Heart right ventricle (tissue), 16 donors: ENCODE measurements at regions of chr9 and their contacts with region 1.

Region 1: DNA sequence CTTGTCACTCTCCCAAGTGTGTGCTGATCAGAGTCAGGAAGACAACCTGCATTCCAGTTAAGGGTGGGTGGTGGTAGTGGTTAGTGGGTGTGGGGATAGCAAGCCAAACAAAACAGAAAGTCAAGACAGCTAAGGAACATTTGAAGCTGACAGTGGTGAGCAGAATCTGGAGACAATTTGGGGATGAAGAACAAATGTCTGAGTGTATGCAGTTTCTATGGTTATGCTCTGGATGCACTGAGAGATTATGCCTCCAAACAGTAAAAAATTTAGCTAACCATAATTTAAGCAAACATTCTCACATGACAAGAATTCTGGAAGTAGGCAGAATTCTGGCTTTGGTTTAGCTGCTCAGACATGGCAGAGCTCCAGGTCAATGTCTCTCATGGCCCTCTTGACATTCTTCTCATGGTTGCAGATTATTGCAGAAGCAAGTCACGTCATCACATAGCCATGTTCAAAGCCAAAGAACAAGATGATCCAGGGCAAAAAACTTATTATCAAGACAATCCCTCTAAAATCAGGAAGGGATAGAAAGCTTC is 148.7 kb downstream of the LURAP1L start:
- DNase-seq: peak in 1 of 2 donors; percentile 6
- ATAC-seq: peak in 6 of 8 donors; percentile 38 to 89 (median 72)
- H3K4me3 ChIP-seq: no peak overlapping the region
- H3K27ac ChIP-seq: peak overlapping the region in 2 of 10 donors; percentile 28 to 37
- H3K4me1 ChIP-seq: peaks cover 0 to 21% (median 8%) of the 10 kb centered on the region in 9 donors
- H3K27me3 ChIP-seq: no peaks in the 10 kb centered on the region
- CTCF ChIP-seq: no peak

Region 2: GRCh38 chr9:12826924-12827565 is 96.5 kb before region 1 on chr9:
- intact Hi-C with region 1: no loop called
- DNase-seq: no peak
- ATAC-seq: no peak
- H3K4me3 ChIP-seq: no peak overlapping the region
- H3K27ac ChIP-seq: no peak overlapping the region
- H3K4me1 ChIP-seq: no peaks in the 10 kb centered on the region
- H3K27me3 ChIP-seq: no peaks in the 10 kb centered on the region
- CTCF ChIP-seq: no peak

Region 3: DNA sequence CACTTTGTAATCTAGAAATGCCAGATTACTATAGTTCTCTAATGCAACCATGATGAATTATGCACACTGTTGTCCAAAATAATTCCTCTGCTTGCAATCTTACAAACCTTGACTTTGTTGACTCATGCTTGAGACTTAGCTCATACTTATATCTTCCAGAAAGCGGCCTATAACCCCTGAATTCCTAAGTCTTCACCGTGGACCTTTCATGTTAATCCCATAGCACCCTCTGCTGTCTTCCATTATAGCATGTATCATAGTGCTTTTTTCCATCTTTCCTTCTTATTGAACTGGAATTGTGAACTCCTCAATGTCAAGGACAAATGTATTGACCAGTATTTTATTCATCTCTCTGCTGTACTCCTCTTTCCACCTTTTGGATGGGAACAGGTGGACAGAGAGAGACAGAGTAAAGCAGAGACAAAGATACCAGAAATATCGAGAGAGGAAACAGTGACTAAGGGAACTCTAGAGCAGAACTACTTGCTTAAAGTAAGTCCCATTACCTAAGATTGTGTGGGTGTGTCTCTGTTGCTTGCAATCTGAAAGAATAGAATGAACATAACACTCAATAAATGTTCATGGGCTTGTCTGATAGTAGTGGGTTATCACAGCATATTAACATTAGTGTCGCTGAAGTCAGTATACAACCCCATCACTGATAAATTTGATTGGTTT is 38.7 kb before region 1 on chr9:
- intact Hi-C with region 1: no loop called
- DNase-seq: no peak
- ATAC-seq: peak in 6 of 8 donors; percentile 52 to 72 (median 59)
- H3K4me3 ChIP-seq: no peak overlapping the region
- H3K27ac ChIP-seq: no peak overlapping the region
- H3K4me1 ChIP-seq: peaks cover 0 to 29% (median 5%) of the 10 kb centered on the region in 9 donors
- H3K27me3 ChIP-seq: no peaks in the 10 kb centered on the region
- CTCF ChIP-seq: peak; percentile 31 to 76 (median 60)

Region 4: GRCh38 chr9:12955530-12956163 is 32.1 kb after region 1 on chr9:
- intact Hi-C with region 1: loop called in 2 of 10 experiments (anchors 1 to 5 kb)
- DNase-seq: no peak
- ATAC-seq: no peak
- H3K4me3 ChIP-seq: no peak overlapping the region
- H3K27ac ChIP-seq: no peak overlapping the region
- H3K4me1 ChIP-seq: no peaks in the 10 kb centered on the region
- H3K27me3 ChIP-seq: no peaks in the 10 kb centered on the region
- CTCF ChIP-seq: no peak

Region 5: DNA sequence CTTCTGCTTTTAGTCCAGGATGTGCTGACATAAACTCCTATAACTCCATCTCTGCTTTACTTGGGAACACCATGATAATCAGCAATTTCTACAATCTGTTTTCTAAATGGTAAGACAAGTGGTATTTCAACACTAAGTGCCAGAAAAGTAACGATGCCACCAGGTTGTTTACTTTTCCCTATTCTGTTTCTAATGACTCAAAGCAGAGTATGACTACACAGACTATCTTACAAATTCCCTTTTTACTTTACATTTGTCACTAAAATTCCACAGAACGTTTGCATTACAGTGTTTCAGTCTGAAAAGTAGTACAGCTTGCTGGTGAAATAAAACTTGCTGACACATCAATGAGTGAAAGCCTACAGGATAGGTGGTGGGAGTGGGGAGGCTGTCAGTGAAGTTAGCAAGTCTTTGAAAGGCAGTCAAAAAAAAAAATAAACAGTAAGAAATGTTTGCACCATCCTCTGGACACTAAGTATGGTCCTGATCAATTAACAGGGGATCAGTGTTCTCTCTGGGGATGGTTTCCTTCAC is 37.8 kb after region 1 on chr9:
- intact Hi-C with region 1: loop called in 2 of 10 experiments (anchors 1 to 5 kb)
- DNase-seq: no peak
- ATAC-seq: no peak
- H3K4me3 ChIP-seq: no peak overlapping the region
- H3K27ac ChIP-seq: no peak overlapping the region
- H3K4me1 ChIP-seq: peaks cover 0 to 12% (median 0%) of the 10 kb centered on the region in 9 donors
- H3K27me3 ChIP-seq: no peaks in the 10 kb centered on the region
- CTCF ChIP-seq: no peak

Region 6: DNA sequence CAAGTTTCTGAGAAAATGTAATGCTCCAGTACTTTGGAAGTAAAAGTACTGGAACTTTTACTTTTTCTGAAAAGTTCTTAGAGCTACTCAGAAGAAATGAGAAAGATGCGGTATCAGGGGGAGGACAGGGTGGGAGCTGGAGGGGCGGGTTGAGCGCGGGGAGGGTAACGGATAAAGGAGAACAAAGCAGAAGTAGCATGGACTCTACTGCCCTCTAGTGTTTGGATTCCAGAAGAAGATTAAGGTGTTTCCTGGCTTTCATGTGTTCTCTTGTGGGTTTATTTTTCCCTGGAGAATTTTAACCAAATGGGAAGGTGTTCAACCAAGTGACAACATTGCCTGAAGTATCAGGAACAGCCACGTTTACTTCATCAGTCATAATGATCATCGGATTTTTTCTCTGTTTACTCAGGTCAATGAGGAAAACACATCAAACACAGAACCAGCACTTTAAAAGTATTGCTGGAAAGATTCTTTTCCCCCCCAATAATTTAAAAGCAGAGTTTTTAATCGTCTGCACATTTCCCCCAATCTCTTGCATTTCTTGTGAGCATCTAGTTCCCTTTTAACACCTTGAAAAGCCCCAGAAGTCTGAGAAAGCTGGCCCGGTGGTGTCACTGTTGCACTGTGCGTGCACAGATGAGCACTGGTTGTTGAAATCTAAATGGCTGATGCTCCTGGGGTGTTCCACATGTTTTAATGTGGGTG is 165.3 kb after region 1 on chr9:
- intact Hi-C with region 1: no loop called
- DNase-seq: peak in 1 of 2 donors; percentile 13
- ATAC-seq: peak in 5 of 8 donors; percentile 51 to 73 (median 65)
- H3K4me3 ChIP-seq: peak overlapping the region in 1 of 10 donors; percentile 16
- H3K27ac ChIP-seq: no peak overlapping the region
- H3K4me1 ChIP-seq: peaks cover 0 to 7% (median 0%) of the 10 kb centered on the region in 9 donors
- H3K27me3 ChIP-seq: no peaks in the 10 kb centered on the region
- CTCF ChIP-seq: peak; percentile 59 to 84 (median 76)